Activated CD8-positive, alpha-beta T cell treated with anti-CD3 and anti-CD28 coated beads for 36 hours (primary cell): ENCODE measurements at regions of chr1 and their contacts with region 1.

Region 1: DNA sequence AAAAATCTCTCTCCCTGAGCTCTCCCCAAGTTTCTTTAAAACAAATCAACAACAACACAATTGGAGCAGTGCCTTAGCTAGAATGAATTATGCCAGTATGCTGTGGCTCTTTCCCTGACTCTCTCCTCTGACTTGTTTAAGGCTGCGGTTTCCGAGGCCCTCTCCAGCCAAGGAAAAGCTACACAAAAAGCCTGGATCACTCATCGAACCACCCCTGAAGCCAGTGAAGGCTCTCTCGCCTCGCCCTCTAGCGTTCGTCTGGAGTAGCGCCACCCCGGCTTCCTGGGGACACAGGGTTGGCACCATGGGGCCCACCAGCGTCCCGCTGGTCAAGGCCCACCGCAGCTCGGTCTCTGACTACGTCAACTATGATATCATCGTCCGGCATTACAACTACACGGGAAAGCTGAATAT is 1.9 kb downstream of the S1PR1 start:
- DNase-seq: peak; percentile 95
- ATAC-seq: peak; percentile 42
- H3K4me3 Mint-ChIP-seq: peak overlapping the region; percentile 86
- H3K27ac Mint-ChIP-seq: peak overlapping the region; percentile 98
- H3K4me1 Mint-ChIP-seq: peaks cover 42% of the 10 kb centered on the region
- H3K27me3 Mint-ChIP-seq: no peaks in the 10 kb centered on the region
- CTCF ChIP-seq: peak; percentile 98

Region 2: GRCh38 chr1:100928128-100928527 is 310.6 kb before region 1 on chr1:
- CTCF ChIA-PET with region 1: interaction called, 28 read pairs
- POLR2A ChIA-PET with region 1: interaction called, 5 read pairs
- intact Hi-C with region 1: loop called (anchors 5 kb)
- DNase-seq: peak; percentile 28
- ATAC-seq: peak; percentile 13
- H3K4me3 Mint-ChIP-seq: no peak overlapping the region
- H3K27ac Mint-ChIP-seq: no peak overlapping the region
- H3K4me1 Mint-ChIP-seq: peaks cover 52% of the 10 kb centered on the region
- H3K27me3 Mint-ChIP-seq: no peaks in the 10 kb centered on the region
- CTCF ChIP-seq: peak; percentile 37

Region 3: GRCh38 chr1:101025657-101026504 is 212.8 kb before region 1 on chr1 and contains the start of gene DPH5:
- CTCF ChIA-PET with region 1: interaction called, 5 read pairs
- POLR2A ChIA-PET with region 1: interaction called, 7 read pairs
- intact Hi-C with region 1: loop called (anchors 5 kb)
- DNase-seq: peak; percentile 95
- ATAC-seq: peak; percentile 96
- H3K4me3 Mint-ChIP-seq: peak within 1 kb of the TSS; percentile 99
- H3K27ac Mint-ChIP-seq: peak within 1 kb of the TSS; percentile 97
- H3K4me1 Mint-ChIP-seq: peaks cover 60% of the 10 kb centered on the region
- H3K27me3 Mint-ChIP-seq: no peaks in the 10 kb centered on the region
- CTCF ChIP-seq: no peak
- total RNA-seq, gene DPH5: 77.3 to 77.4 TPM

Region 4: DNA sequence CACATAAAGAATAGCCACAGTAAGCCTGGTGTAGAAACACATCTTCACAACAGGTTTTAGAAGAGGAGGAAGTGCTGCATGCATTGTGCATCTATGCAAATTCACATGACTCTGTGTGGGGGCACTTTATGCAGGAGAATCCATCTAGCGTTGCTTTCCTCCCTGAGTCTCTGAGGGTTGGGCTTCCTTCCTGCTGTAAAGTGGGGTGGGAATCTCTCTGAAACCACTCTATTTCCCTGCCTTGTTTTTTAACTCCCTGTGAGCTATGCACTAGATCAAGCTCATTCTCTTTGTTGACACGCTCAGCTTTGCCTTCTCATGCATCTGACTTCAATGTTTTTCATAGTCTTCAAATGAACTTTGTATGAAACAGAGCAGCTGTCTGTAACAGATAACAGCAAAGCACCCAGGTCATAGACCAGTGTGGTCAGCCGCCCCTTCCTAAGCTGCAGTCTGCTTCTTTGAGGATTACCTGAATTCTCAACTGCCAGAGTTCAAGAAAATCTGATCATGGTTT is 110.4 kb before region 1 on chr1:
- CTCF ChIA-PET with region 1: interaction called, 22 read pairs
- POLR2A ChIA-PET with region 1: interaction called, 11 read pairs
- intact Hi-C with region 1: loop called (anchors 5 kb)
- DNase-seq: peak; percentile 53
- ATAC-seq: peak; percentile 55
- H3K4me3 Mint-ChIP-seq: peak overlapping the region; percentile 1
- H3K27ac Mint-ChIP-seq: peak overlapping the region; percentile 72
- H3K4me1 Mint-ChIP-seq: peaks cover 61% of the 10 kb centered on the region
- H3K27me3 Mint-ChIP-seq: no peaks in the 10 kb centered on the region
- CTCF ChIP-seq: no peak

Region 5: DNA sequence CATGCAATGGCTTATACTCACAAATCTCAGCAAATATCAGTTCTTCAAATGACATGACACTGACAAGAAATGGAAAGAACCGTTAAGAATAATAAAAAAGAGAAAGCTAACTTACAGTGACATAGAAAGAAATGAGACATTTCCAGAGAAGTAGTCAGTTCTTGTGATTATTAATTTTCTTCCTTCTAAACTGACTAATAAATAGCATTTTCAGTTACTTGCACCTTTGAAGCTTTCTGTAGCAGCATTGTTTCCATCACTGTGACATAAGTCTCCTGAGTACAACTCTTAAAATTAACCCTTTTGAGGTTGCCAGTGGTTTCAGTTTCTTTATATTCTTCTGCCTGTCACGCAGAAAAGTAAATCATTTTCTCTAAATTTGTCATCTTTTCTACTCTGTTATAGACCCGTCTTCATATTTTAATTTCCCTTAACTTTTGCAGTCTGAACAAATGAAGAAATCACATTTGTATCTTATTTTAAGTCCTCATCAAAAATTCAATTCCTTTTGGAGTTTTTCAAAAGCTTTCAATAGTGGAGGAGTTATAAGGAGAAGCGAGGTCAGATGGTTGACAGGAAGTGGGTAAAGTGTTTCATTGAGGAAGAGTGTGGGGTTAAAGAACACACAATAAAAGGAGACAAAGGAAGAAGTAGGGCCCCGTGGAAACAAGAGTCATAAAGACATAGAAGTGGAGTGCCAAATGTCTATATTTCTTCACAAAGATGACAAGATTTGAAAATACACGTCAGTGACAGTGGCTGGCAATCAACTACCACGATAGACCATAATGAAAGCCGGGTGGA is 59.8 kb before region 1 on chr1:
- CTCF ChIA-PET with region 1: interaction called, 41 read pairs
- POLR2A ChIA-PET with region 1: interaction called, 106 read pairs
- intact Hi-C with region 1: loop called (anchors 1 kb)
- DNase-seq: peak; percentile 63
- ATAC-seq: peak; percentile 75
- H3K4me3 Mint-ChIP-seq: peak overlapping the region; percentile 75
- H3K27ac Mint-ChIP-seq: peak overlapping the region; percentile 100
- H3K4me1 Mint-ChIP-seq: peaks cover 77% of the 10 kb centered on the region
- H3K27me3 Mint-ChIP-seq: no peaks in the 10 kb centered on the region
- CTCF ChIP-seq: no peak

Region 6: GRCh38 chr1:101198842-101199636 is 39.6 kb before region 1 on chr1:
- CTCF ChIA-PET with region 1: interaction called, 25 read pairs
- POLR2A ChIA-PET with region 1: interaction called, 25 read pairs
- intact Hi-C with region 1: no loop called
- DNase-seq: peak; percentile 81
- ATAC-seq: peak; percentile 85
- H3K4me3 Mint-ChIP-seq: peak overlapping the region; percentile 20
- H3K27ac Mint-ChIP-seq: peak overlapping the region; percentile 89
- H3K4me1 Mint-ChIP-seq: peaks cover 24% of the 10 kb centered on the region
- H3K27me3 Mint-ChIP-seq: no peaks in the 10 kb centered on the region
- CTCF ChIP-seq: no peak

Region 7: GRCh38 chr1:101288491-101288944 is 49.8 kb after region 1 on chr1:
- CTCF ChIA-PET with region 1: interaction called, 301 read pairs
- POLR2A ChIA-PET with region 1: interaction called, 72 read pairs
- intact Hi-C with region 1: loop called (anchors 2 kb)
- DNase-seq: peak; percentile 79
- ATAC-seq: peak; percentile 25
- H3K4me3 Mint-ChIP-seq: no peak overlapping the region
- H3K27ac Mint-ChIP-seq: peak overlapping the region; percentile 43
- H3K4me1 Mint-ChIP-seq: peaks cover 83% of the 10 kb centered on the region
- H3K27me3 Mint-ChIP-seq: no peaks in the 10 kb centered on the region
- CTCF ChIP-seq: peak; percentile 88